Heart right ventricle (tissue), 16 donors: ENCODE measurements at regions of chr12 and their contacts with region 1.

Region 1: GRCh38 chr12:124767066-124767821 is 96.4 kb downstream of the SCARB1 start:
- DNase-seq: peak; percentile 80 to 87
- ATAC-seq: peak; percentile 68 to 89 (median 83)
- H3K4me3 ChIP-seq: no peak overlapping the region
- H3K27ac ChIP-seq: peak overlapping the region in 7 of 10 donors; percentile 66 to 87 (median 81)
- H3K4me1 ChIP-seq: peaks cover 6 to 55% (median 38%) of the 10 kb centered on the region in 9 donors
- H3K27me3 ChIP-seq: peaks cover 0 to 4% (median 0%) of the 10 kb centered on the region in 7 donors
- CTCF ChIP-seq: peak; percentile 98 to 100 (median 100)

Region 2: GRCh38 chr12:124053851-124054250 is 713.4 kb before region 1 on chr12:
- intact Hi-C with region 1: loop called (anchors 1 to 5 kb)
- DNase-seq: peak; percentile 34 to 66
- ATAC-seq: peak; percentile 79 to 92 (median 92)
- H3K4me3 ChIP-seq: no peak overlapping the region
- H3K27ac ChIP-seq: no peak overlapping the region
- H3K4me1 ChIP-seq: peaks cover 0 to 19% (median 6%) of the 10 kb centered on the region in 9 donors
- H3K27me3 ChIP-seq: no peaks in the 10 kb centered on the region
- CTCF ChIP-seq: peak; percentile 39 to 85 (median 70)

Region 3: DNA sequence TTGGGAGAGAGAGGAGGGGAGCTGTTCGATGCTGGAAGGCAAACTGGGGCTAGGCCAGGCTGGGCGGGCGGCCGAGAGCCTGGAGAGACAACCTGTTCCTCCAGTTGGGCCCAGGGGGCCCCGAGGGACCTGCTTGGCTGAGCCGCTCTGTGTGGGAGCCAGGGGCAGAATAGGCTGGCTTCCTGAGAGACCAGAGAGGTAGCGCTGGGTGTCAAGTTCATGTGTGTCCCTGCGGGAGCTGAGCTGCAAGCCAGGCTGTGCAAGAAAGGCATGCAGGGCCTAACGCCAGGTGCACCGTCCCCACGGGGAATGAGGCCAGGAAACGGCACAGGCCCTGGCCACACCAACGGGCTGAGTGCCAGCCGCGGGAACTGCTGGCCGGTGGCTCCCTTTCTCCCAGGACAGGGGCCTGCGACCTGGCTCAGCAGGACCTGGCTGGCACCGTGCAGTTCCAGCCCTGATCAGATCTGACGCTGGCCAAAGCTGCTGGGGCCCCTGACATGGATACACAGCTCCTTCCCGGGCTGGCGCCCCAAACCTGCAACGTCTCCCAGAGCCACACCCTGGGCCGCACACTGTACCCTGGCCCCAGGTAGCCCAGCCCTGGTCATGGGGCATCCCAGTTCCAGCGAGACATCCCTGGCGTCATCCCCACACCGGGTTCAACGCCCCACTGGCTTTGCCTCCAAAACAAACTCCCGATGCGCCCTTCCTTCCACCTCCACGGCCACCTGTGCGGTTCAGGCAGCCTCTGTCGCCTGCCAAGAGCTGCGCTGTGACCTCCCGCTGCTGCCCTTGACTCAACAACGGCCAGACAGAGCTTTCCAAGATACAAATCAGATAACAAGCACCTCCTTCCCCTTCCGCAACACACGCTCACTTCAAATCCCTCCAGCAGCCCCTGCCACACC is 407.3 kb before region 1 on chr12:
- intact Hi-C with region 1: loop called in 4 of 10 experiments (anchors 5 to 10 kb)
- DNase-seq: peak; percentile 88 to 94
- ATAC-seq: peak; percentile 72 to 96 (median 85)
- H3K4me3 ChIP-seq: no peak overlapping the region
- H3K27ac ChIP-seq: peak overlapping the region; percentile 21 to 81 (median 70)
- H3K4me1 ChIP-seq: peaks cover 31 to 69% (median 60%) of the 10 kb centered on the region in 9 donors
- H3K27me3 ChIP-seq: no peaks in the 10 kb centered on the region
- CTCF ChIP-seq: peak in 1 of 9 donors; percentile 16

Region 4: DNA sequence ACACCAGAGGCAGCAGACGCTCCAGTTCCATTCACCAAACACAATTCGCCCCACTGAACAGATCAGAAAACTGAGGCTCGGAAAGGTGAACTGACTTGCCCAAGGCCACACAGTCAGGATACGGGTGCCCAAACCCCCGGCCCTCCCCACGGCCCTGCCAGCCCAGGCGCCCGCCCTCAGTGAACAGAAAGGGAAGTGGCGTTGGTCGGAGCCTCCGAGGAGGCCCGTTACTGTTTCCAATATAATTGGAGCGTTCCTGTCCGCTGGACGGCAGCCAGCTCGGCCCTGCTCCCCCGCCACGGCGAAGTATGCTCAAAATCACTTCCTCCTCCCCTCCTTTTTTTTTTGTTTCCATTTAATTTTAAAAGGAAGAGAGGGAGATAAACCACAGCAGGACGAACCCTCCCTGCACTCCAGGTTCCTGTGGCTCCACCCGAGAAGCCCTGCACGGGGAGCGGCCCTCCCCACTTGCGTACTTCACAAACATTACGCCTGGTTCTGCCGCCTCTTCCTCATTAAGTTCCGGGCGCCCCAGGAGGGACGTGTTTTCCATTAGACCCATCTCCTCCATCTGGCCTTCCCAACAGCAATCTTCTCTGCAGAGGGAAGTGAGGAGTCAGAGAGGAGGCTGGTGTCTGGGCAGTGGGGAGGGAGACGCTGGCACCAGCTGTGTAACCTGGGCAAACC is 261.0 kb before region 1 on chr12:
- intact Hi-C with region 1: loop called in 3 of 10 experiments (anchors 5 to 10 kb)
- DNase-seq: peak; percentile 86 to 89
- ATAC-seq: peak in 7 of 8 donors; percentile 38 to 79 (median 59)
- H3K4me3 ChIP-seq: peak overlapping the region in 6 of 10 donors; percentile 5 to 26 (median 22)
- H3K27ac ChIP-seq: peak overlapping the region; percentile 2 to 93 (median 86)
- H3K4me1 ChIP-seq: peaks cover 36 to 97% (median 86%) of the 10 kb centered on the region in 9 donors
- H3K27me3 ChIP-seq: no peaks in the 10 kb centered on the region
- CTCF ChIP-seq: no peak

Region 5: GRCh38 chr12:124578445-124578844 is 188.8 kb before region 1 on chr12:
- intact Hi-C with region 1: loop called in 2 of 10 experiments (anchors 5 to 10 kb)
- DNase-seq: no peak
- ATAC-seq: no peak
- H3K4me3 ChIP-seq: no peak overlapping the region
- H3K27ac ChIP-seq: no peak overlapping the region
- H3K4me1 ChIP-seq: peaks cover 3 to 17% (median 10%) of the 10 kb centered on the region in 9 donors
- H3K27me3 ChIP-seq: no peaks in the 10 kb centered on the region
- CTCF ChIP-seq: no peak

Region 6: DNA sequence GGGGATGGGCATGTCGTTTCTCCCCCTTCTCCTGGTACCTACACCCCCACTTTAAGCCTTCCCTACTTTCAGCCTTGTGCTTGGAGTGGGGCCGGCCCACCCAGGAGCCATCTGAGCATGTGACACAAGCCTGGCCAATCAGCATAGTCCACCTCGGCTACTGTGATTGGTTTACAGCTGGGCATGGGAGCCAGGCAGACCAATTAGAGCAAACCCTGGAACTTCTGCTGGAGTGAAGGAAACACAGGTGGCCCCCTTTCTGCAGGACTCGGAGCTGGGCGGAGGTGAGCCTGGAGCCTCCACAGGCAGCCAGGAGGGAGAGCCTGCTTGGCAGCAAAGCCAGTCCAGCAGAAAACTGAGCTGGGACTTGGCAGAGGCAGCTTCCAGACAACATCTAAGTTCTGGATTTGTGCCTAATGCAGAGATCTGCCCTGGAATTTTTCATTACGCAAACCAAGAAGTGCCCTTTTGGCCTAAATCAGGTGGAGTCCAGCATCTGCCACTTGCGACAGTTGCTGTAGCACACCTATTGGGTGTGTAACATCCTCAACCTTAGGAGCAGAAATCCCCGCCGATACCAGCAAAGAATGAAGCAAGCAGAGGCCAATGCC is 36.9 kb after region 1 on chr12:
- intact Hi-C with region 1: no loop called
- DNase-seq: no peak
- ATAC-seq: peak in 7 of 8 donors; percentile 18 to 67 (median 60)
- H3K4me3 ChIP-seq: no peak overlapping the region
- H3K27ac ChIP-seq: peak overlapping the region in 2 of 10 donors; percentile 1 to 10
- H3K4me1 ChIP-seq: peaks cover 0 to 7% (median 0%) of the 10 kb centered on the region in 9 donors
- H3K27me3 ChIP-seq: no peaks in the 10 kb centered on the region
- CTCF ChIP-seq: no peak

Region 7: GRCh38 chr12:124906606-124907261 is 139.5 kb after region 1 on chr12:
- intact Hi-C with region 1: loop called in 1 of 10 experiments (anchors 5 kb)
- DNase-seq: peak; percentile 58 to 93
- ATAC-seq: peak; percentile 40 to 74 (median 53)
- H3K4me3 ChIP-seq: no peak overlapping the region
- H3K27ac ChIP-seq: peak overlapping the region in 3 of 10 donors; percentile 16 to 43 (median 32)
- H3K4me1 ChIP-seq: peaks cover 4 to 56% (median 42%) of the 10 kb centered on the region in 9 donors
- H3K27me3 ChIP-seq: no peaks in the 10 kb centered on the region
- CTCF ChIP-seq: peak; percentile 90 to 99 (median 98)